ENCODE measurements at regions of chr1 and their contacts with region 1.

Region 1: GRCh38 chr1:202516434-202516877 is 168.0 kb downstream of the PPP1R12B start:
- DNase-seq: no peak
- H3K4me3 ChIP-seq: no peak overlapping the region
- H3K4me3 Mint-ChIP-seq: no peak overlapping the region
- H3K27ac ChIP-seq: no peak overlapping the region
- H3K27ac Mint-ChIP-seq: no peak overlapping the region
- H3K4me1 ChIP-seq: no peaks in the 10 kb centered on the region
- H3K4me1 Mint-ChIP-seq: peaks cover 3% of the 10 kb centered on the region
- H3K27me3 ChIP-seq: peaks cover 0 to 3% of the 10 kb centered on the region in 2 donors
- H3K27me3 Mint-ChIP-seq: peaks cover 4 to 17% (median 10%) of the 10 kb centered on the region in 3 donors
- CTCF ChIP-seq: no peak

Region 2: DNA sequence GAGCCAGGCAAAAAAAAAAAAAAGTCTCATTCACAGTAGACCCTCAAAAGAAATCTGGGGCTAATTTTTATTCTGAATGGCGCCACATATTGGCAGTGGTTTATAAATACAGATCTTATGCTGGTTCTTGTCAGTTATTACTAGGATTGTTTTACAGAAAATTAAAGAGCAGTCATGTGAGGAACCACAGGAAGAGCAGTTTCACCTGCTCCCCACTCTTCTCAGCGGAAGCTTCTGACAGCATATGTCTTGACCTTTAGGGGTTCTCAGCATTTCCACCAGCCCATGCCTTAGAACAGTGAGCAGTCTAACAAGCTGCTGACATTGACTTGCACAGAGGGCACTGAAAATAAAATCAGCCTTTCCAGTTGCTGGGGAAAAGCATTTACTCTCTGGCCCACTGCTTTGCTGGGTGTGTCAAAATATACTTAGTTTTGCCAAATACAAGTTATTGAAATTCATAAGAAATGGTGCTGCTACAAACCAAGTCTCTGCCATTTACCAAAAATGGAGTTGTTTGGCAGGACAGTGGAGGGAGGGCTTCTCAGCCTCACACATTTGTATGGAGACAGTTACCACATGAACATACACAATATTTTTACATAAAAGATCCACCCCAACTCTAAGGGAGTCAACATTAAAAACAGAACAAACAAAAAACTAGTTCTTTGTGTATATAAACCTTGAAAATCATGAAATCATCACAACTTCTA is 49.6 kb after region 1 on chr1:
- intact Hi-C with region 1: loop called in 1 of 2 experiments (anchors 10 kb)
- DNase-seq: no peak
- H3K4me3 ChIP-seq: no peak overlapping the region
- H3K4me3 Mint-ChIP-seq: no peak overlapping the region
- H3K27ac ChIP-seq: no peak overlapping the region
- H3K27ac Mint-ChIP-seq: no peak overlapping the region
- H3K4me1 ChIP-seq: no peaks in the 10 kb centered on the region
- H3K4me1 Mint-ChIP-seq: no peaks in the 10 kb centered on the region
- H3K27me3 ChIP-seq: peaks cover 0 to 3% of the 10 kb centered on the region in 2 donors
- H3K27me3 Mint-ChIP-seq: peaks cover 4 to 26% (median 12%) of the 10 kb centered on the region in 3 donors
- CTCF ChIP-seq: no peak

Region 3: GRCh38 chr1:202639500-202639899 is 123.0 kb after region 1 on chr1:
- intact Hi-C with region 1: no loop called
- DNase-seq: no peak
- H3K4me3 ChIP-seq: no peak overlapping the region
- H3K4me3 Mint-ChIP-seq: peak overlapping the region in 1 of 2 donors; percentile 61
- H3K27ac ChIP-seq: no peak overlapping the region
- H3K27ac Mint-ChIP-seq: no peak overlapping the region
- H3K4me1 ChIP-seq: no peaks in the 10 kb centered on the region
- H3K4me1 Mint-ChIP-seq: peaks cover 16% of the 10 kb centered on the region
- H3K27me3 ChIP-seq: peaks cover 94 to 98% of the 10 kb centered on the region in 2 donors
- H3K27me3 Mint-ChIP-seq: peaks cover 95 to 100% (median 96%) of the 10 kb centered on the region in 3 donors
- CTCF ChIP-seq: no peak